CD4-positive, alpha-beta memory T cell (primary cell): ENCODE measurements at regions of chr2 and their contacts with region 1.

Region 1: GRCh38 chr2:112254466-112255239 is at the start of gene ZC3H8:
- DNase-seq: peak; percentile 93 to 96 (median 96)
- H3K4me3 ChIP-seq: peak within 1 kb of the TSS; percentile 75 to 96
- H3K4me3 Mint-ChIP-seq: peak within 1 kb of the TSS; percentile 88 to 93 (median 91)
- H3K27ac ChIP-seq: peak within 1 kb of the TSS; percentile 92
- H3K27ac Mint-ChIP-seq: peak within 1 kb of the TSS; percentile 87 to 97 (median 96)
- H3K4me1 ChIP-seq: peaks cover 35% of the 10 kb centered on the region
- H3K4me1 Mint-ChIP-seq: peaks cover 5 to 23% (median 15%) of the 10 kb centered on the region in 4 donors
- H3K27me3 ChIP-seq: no peaks in the 10 kb centered on the region
- H3K27me3 Mint-ChIP-seq: no peaks in the 10 kb centered on the region
- total RNA-seq, gene ZC3H8: 17.9 to 18.9 TPM

Region 2: GRCh38 chr2:112156152-112156986 is 98.3 kb before region 1 on chr2:
- CTCF ChIA-PET with region 1: interaction called, 3 read pairs
- POLR2A ChIA-PET with region 1: interaction called, 19 read pairs
- intact Hi-C with region 1: no loop called
- DNase-seq: peak in 2 of 5 donors; percentile 21 to 51
- H3K4me3 ChIP-seq: peak overlapping the region; percentile 23 to 53
- H3K4me3 Mint-ChIP-seq: peak overlapping the region; percentile 78 to 89 (median 82)
- H3K27ac ChIP-seq: peak overlapping the region; percentile 16
- H3K27ac Mint-ChIP-seq: peak overlapping the region; percentile 82 to 95 (median 89)
- H3K4me1 ChIP-seq: peaks cover 28% of the 10 kb centered on the region
- H3K4me1 Mint-ChIP-seq: peaks cover 23 to 37% (median 31%) of the 10 kb centered on the region in 4 donors
- H3K27me3 ChIP-seq: no peaks in the 10 kb centered on the region
- H3K27me3 Mint-ChIP-seq: no peaks in the 10 kb centered on the region

Region 3: GRCh38 chr2:112187805-112188596 is 66.7 kb before region 1 on chr2:
- CTCF ChIA-PET with region 1: interaction called, 17 read pairs
- POLR2A ChIA-PET with region 1: interaction called, 44 read pairs
- intact Hi-C with region 1: loop called (anchors 1 kb)
- DNase-seq: peak; percentile 84 to 94 (median 87)
- H3K4me3 ChIP-seq: peak overlapping the region in 1 of 2 donors; percentile 30
- H3K4me3 Mint-ChIP-seq: peak overlapping the region; percentile 51 to 86 (median 74)
- H3K27ac ChIP-seq: peak overlapping the region; percentile 80
- H3K27ac Mint-ChIP-seq: peak overlapping the region; percentile 93 to 100 (median 99)
- H3K4me1 ChIP-seq: peaks cover 91% of the 10 kb centered on the region
- H3K4me1 Mint-ChIP-seq: peaks cover 65 to 92% (median 78%) of the 10 kb centered on the region in 4 donors
- H3K27me3 ChIP-seq: no peaks in the 10 kb centered on the region
- H3K27me3 Mint-ChIP-seq: peaks cover 0 to 1% of the 10 kb centered on the region in 2 donors

Region 4: DNA sequence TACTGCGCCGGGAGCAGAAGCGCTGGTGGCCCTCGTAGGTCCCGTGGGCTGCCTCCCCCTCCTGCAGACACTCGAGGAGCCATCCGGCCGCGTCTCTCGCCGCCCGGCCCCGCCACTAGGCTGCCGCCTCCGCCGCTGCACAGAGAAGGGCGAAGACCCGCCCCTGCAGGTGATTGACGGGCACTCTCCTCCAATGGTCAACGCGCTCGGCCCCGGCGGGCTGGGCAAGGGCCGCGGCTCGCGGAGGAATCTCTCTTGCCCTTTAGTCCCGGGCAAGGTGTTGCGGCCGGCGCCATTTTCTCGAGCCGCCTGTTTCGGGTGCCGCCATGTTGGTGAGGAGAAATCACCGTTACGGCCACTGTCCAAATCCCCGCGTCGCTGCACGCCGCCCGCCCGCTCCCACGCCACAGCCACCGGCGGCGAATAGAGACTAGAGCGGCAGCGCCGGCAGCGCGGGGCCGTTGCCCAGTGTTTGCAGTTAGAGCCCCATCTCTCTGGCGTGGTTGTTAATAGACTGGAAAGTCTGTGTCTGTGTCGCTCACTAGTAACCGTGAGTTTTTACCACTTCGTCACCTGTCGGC is 20.7 kb after region 1 on chr2 and contains the start of gene ZC3H6:
- CTCF ChIA-PET with region 1: interaction called, 14 read pairs
- POLR2A ChIA-PET with region 1: interaction called, 27 read pairs
- intact Hi-C with region 1: loop called (anchors 1 kb)
- DNase-seq: peak; percentile 97 to 100 (median 99)
- H3K4me3 ChIP-seq: peak within 1 kb of the TSS; percentile 90 to 97
- H3K4me3 Mint-ChIP-seq: peak within 1 kb of the TSS; percentile 91 to 97 (median 94)
- H3K27ac ChIP-seq: peak within 1 kb of the TSS; percentile 100
- H3K27ac Mint-ChIP-seq: peak within 1 kb of the TSS; percentile 97 to 100 (median 99)
- H3K4me1 ChIP-seq: peaks cover 28% of the 10 kb centered on the region
- H3K4me1 Mint-ChIP-seq: peaks cover 11 to 46% (median 19%) of the 10 kb centered on the region in 4 donors
- H3K27me3 ChIP-seq: no peaks in the 10 kb centered on the region
- H3K27me3 Mint-ChIP-seq: no peaks in the 10 kb centered on the region
- total RNA-seq, gene ZC3H6: 36.8 to 43.2 TPM

Region 5: DNA sequence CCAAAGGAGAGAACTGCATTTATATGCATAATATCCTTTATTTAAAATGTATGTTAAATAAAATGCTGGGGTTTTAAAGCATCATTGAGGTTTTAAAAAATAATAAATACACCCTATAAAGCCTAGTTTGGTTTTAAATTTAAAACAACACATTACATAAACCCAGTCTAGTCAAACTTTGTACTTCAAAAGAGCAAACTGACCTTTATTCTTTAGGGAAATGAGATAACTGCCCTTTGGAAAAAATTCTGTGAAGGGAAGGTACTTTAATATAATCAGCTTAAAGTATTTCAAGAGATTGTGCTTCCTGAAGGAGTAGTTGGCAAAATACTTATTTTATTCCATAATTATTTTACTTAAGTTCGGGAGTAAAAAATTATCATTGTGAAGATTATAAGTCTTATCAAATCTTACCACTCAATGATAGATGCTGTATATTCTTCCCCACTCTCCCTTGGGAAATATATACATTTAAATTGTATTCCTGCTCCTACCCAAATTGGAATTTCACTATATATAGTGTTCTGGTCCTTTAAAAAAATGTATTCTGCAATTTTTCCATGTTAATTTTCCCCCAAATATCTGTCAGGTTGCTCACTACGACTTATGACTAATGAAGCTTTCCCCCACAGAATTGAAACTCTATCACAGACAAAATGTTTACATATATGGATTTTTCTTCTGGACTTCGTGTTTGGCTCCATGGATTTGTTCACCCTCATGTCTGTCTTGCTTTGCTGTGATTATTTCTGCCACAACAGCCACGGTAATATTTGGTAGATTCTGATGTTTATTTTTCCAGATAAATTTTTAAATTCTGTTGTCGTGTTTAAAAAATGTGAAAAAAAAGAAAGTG is 62.9 kb after region 1 on chr2:
- CTCF ChIA-PET with region 1: interaction called, 4 read pairs
- POLR2A ChIA-PET with region 1: no interaction called
- intact Hi-C with region 1: loop called (anchors 5 kb)
- DNase-seq: no peak
- H3K4me3 ChIP-seq: no peak overlapping the region
- H3K4me3 Mint-ChIP-seq: no peak overlapping the region
- H3K27ac ChIP-seq: no peak overlapping the region
- H3K27ac Mint-ChIP-seq: no peak overlapping the region
- H3K4me1 ChIP-seq: no peaks in the 10 kb centered on the region
- H3K4me1 Mint-ChIP-seq: no peaks in the 10 kb centered on the region
- H3K27me3 ChIP-seq: no peaks in the 10 kb centered on the region
- H3K27me3 Mint-ChIP-seq: no peaks in the 10 kb centered on the region

Region 6: GRCh38 chr2:112584134-112584890 is 329.7 kb after region 1 on chr2 and contains the start of gene CHCHD5:
- CTCF ChIA-PET with region 1: interaction called, 3 read pairs
- POLR2A ChIA-PET with region 1: interaction called, 3 read pairs
- intact Hi-C with region 1: loop called (anchors 2 kb)
- DNase-seq: peak; percentile 92 to 97 (median 96)
- H3K4me3 ChIP-seq: peak within 1 kb of the TSS; percentile 63 to 88
- H3K4me3 Mint-ChIP-seq: peak within 1 kb of the TSS; percentile 95 to 98 (median 96)
- H3K27ac ChIP-seq: peak within 1 kb of the TSS; percentile 79
- H3K27ac Mint-ChIP-seq: peak within 1 kb of the TSS; percentile 94 to 99 (median 98)
- H3K4me1 ChIP-seq: peaks cover 27% of the 10 kb centered on the region
- H3K4me1 Mint-ChIP-seq: peaks cover 19 to 54% (median 31%) of the 10 kb centered on the region in 4 donors
- H3K27me3 ChIP-seq: no peaks in the 10 kb centered on the region
- H3K27me3 Mint-ChIP-seq: no peaks in the 10 kb centered on the region
- total RNA-seq, gene CHCHD5: 23.3 to 24.9 TPM